ENCODE measurements at regions of chr17 and their contacts with region 1.

Region 1: DNA sequence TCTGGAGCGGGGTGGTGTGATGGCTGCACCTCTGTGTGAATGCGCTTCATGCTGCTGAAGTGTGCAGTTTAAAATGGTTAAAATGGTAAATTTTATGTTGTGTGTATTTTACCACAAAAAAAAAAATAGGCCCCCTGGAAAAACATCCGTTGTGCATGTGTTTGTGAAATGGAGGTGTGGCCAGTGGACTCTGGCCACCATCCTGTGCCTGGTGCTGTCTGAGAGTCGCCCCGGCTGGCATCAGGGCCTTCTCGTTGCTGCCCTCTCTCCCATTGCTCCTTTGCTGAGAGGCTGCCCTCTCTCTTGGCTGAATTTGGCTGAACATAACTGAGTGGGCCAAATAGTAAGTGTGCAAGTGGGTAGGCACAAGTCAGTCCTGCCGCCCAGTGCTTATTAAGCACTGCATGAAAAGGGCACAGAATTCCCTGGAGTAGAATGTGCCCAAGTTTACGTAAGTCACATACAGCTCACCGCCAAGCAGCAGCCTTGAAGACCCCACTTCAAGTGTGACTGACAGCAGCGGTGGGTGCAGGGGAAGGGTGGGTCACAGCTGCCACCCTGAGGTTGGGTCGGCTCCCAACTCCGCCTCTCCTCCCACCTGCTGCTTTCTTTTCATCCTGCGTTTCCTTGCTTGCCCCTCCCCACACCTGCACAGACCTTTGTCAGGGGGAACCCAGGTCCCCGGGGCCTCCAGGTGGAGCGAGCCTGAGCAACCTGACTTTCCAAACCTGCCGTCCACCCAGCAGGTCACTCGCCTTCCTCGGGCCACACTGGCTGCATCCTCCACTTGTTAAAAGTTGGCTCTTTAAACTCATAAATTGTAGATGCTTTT is 46.8 kb downstream of the FOXK2 start:
- DNase-seq: no peak

Region 2: GRCh38 chr17:82668631-82669099 is 102.3 kb after region 1 on chr17:
- intact Hi-C with region 1: loop called in 1 of 2 experiments (anchors 1 kb)
- DNase-seq: peak; percentile 87

Region 3: GRCh38 chr17:82734987-82735866 is 168.9 kb after region 1 on chr17 and contains the start of gene FN3K:
- intact Hi-C with region 1: no loop called
- DNase-seq: peak; percentile 91
- total RNA-seq, gene FN3K: 9.6 to 13.2 TPM